Right ventricle myocardium inferior (tissue), 1 donor: ENCODE measurements at regions of chr1 and their contacts with region 1.

Region 1: DNA sequence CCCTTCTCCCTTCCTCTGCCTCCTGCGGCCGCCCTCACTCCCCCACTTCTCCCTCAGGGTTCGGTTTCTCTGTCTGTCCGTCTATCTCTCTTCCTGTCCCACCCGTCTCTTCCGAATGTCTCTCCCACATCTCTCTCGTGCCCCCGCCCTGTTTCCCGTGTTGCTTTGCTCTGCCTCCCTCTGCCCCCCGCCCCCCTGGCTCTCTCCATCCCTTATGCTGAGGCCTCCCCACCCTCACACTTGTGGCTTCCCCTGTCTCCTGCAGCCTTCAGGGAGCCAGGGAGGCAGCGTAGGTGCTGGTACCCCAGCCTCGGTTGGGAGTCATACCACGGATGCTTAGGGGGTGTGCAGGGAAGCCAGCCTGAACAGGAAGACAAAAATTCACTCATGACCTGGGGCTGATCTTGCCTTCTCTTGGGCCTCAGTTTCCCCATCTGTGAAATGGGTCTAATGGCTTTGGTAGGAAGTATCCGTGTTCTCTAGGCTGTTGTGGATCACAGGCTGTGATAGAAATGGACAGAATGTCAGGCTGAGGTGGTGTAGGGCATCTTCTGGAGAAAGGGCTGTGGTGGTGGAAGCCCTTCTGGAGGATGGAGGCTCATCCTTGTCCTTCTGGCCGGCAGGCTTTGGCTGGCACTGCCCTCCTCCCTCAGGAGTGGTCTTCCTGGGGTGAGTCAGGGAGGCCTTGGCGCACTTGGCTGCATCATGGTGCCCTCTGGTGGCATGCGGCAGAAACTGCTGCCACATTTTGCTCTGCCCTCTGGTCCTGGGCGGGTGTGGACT is 55.5 kb downstream of the FOXO6 start:
- DNase-seq: peak; percentile 81
- ATAC-seq: peak; percentile 57

Region 2: DNA sequence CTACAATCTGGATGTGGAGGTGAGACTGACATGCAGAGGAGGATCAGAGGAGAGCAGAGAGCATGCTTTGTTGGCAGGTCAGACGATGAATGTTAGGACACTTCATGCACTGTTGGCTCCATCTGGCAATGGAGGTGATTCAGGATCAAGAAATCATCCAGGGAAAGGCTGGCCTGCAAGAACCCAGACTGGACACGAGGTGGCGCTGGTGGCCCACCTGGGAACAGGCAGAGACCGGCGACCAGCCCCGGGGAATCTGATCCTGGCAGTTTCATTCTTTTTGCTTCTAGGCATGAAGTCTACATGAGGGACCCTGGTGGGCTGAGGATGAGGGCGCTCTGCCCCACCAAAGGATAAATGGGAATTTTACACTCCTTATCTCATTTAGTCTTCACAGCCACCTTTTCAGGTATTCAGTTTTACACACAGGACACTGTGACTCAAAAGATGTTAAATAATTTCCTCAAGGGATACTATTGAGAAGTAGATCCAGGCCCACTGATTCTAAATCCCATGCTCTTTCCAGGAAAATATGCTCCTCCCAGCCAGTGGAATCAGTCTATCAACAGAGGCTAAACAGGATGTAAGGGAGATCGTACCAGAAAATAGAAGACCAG is 148.5 kb before region 1 on chr1:
- intact Hi-C with region 1: loop called (anchors 1 kb)
- DNase-seq: peak; percentile 87
- ATAC-seq: peak; percentile 82

Region 3: GRCh38 chr1:41282679-41283317 is 133.9 kb before region 1 on chr1:
- intact Hi-C with region 1: loop called (anchors 2 kb)
- DNase-seq: no peak
- ATAC-seq: peak; percentile 58

Region 4: DNA sequence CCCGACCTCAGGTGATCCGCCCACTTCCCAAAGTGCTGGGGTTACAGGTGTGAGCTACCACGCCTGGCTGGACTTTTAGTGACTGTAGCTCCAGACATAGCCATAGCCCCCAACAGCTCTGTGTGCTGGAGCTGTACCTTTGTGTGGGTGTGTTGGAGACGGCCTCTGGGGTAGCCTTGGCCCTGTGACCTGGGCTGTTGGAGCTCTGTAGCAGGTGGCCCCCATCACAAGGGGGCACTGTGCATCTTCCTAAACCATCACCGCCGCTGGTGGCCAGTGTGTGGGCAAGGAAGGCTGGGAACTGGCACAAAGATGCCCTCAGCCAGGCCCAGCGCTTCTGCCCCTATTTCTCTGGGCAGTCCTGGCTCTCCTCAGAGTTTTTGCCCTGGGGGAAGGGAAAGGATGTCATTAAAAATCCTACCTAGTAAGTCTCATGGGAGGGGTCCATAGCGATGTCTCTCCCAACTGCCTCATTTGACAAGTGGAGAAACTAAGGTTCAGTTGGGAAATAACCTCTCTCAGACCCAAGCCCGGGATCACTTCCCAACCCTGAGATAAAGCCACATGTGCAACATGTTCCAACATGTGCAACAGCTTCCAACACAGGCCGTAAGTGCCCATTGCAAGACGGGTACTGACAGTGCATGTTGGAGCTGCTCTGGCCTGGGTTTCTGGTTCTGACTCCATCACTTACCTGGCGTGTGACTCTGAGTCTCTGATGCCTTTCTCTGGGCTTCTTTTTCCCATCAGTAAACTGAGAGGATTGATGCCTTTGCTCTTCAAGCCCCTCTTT is 93.7 kb before region 1 on chr1:
- intact Hi-C with region 1: loop called (anchors 2 kb)
- DNase-seq: no peak
- ATAC-seq: peak; percentile 73

Region 5: GRCh38 chr1:41360993-41361753 is 55.6 kb before region 1 on chr1 and contains the start of gene FOXO6:
- intact Hi-C with region 1: loop called (anchors 5 kb)
- DNase-seq: peak; percentile 100
- ATAC-seq: peak; percentile 94
- total RNA-seq, gene FOXO6: 4.5 TPM